ENCODE measurements at regions of chr17 and their contacts with region 1.

Region 1: DNA sequence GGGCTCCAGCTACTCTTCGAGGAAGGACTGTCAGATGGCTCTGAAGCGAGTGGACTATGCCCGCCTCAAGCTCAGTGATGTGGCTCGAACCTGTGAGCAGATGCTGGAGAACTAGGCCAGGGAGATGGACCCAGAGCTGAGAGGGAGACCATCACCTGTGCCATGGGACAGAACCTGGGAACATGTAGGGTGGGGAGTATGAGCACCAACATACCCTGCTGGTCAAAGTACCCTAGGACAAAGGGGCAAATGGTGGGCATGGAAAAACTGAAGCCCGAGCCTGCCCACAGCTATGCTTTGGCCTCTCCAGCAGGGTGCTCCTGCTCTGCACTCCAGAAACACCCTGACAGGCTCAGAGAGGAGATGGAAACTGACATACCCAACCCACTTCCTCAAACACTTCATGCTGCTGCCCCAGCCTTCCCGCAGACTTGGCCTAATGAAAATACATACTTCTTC is 1.9 kb downstream of the MED11 start:
- DNase-seq: peak; percentile 49
- ATAC-seq: peak; percentile 65
- H3K4me3 Mint-ChIP-seq: peak overlapping the region; percentile 70
- H3K27ac Mint-ChIP-seq: peak overlapping the region; percentile 90
- H3K4me1 Mint-ChIP-seq: peaks cover 54% of the 10 kb centered on the region
- H3K27me3 Mint-ChIP-seq: no peaks in the 10 kb centered on the region
- CTCF ChIP-seq: no peak

Region 2: DNA sequence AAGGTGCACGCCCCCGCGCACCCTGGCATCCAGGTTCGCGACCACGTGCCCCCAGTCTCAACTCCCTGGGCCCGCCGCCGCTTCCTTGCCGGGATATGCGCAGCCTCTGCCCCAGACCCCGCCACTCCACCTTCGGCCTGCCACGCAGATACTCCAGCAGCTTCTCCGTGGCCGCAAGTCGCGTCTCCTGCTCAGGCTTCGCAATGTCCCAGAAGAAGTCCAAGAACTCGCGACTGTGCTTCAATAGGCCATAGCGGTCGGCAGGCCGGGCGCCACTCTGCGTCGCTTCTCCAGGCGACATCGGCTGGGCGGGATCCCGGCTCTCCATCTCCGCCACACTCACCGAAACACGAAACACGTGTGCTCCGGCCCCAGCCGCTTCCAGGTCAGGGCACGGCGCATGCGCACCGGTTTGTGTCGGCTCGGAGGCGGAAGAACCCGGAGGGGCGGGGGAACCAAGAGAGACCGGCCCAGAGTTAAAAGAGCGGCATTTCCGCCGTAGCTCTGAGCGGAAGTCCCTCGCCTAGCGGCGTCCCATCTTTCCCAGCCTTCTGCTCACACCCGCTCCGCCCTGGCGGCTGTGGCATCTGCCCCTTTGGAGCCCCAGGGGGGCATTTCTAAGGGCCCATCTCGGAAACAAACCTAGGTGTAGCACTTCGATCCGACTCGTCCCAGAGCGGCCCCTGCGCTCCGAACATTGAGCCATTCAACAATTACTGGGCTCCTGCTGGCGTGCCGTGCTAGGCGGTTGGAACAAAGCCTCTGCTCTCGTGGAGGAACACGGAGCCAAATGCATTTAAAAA is 177.9 kb before region 1 on chr17 and contains the start of gene MYBBP1A:
- CTCF ChIA-PET with region 1: no interaction called
- POLR2A ChIA-PET with region 1: no interaction called
- intact Hi-C with region 1: loop called (anchors 1 kb)
- DNase-seq: peak; percentile 94
- ATAC-seq: peak; percentile 95
- H3K4me3 Mint-ChIP-seq: peak within 1 kb of the TSS; percentile 96
- H3K27ac Mint-ChIP-seq: peak within 1 kb of the TSS; percentile 98
- H3K4me1 Mint-ChIP-seq: peaks cover 28% of the 10 kb centered on the region
- H3K27me3 Mint-ChIP-seq: no peaks in the 10 kb centered on the region
- CTCF ChIP-seq: no peak
- total RNA-seq, gene MYBBP1A: 90.3 and 108 TPM in 2 replicates

Region 3: GRCh38 chr17:4789901-4790704 is 57.0 kb after region 1 on chr17:
- CTCF ChIA-PET with region 1: interaction called, 17 read pairs
- POLR2A ChIA-PET with region 1: interaction called, 10 read pairs
- intact Hi-C with region 1: loop called (anchors 1 kb)
- DNase-seq: peak; percentile 82
- ATAC-seq: peak; percentile 91
- H3K4me3 Mint-ChIP-seq: peak overlapping the region; percentile 89
- H3K27ac Mint-ChIP-seq: peak overlapping the region; percentile 80
- H3K4me1 Mint-ChIP-seq: peaks cover 19% of the 10 kb centered on the region
- H3K27me3 Mint-ChIP-seq: peaks cover 18% of the 10 kb centered on the region
- CTCF ChIP-seq: no peak

Region 4: GRCh38 chr17:4833178-4833940 is 100.3 kb after region 1 on chr17 and contains the start of gene MINK1:
- CTCF ChIA-PET with region 1: no interaction called
- POLR2A ChIA-PET with region 1: interaction called, 3 read pairs
- intact Hi-C with region 1: loop called (anchors 1 kb)
- DNase-seq: peak; percentile 88
- ATAC-seq: peak; percentile 95
- H3K4me3 Mint-ChIP-seq: peak within 1 kb of the TSS; percentile 94
- H3K27ac Mint-ChIP-seq: peak within 1 kb of the TSS; percentile 96
- H3K4me1 Mint-ChIP-seq: peaks cover 33% of the 10 kb centered on the region
- H3K27me3 Mint-ChIP-seq: no peaks in the 10 kb centered on the region
- CTCF ChIP-seq: no peak
- total RNA-seq, gene MINK1: 61.3 and 65.3 TPM in 2 replicates

Region 5: DNA sequence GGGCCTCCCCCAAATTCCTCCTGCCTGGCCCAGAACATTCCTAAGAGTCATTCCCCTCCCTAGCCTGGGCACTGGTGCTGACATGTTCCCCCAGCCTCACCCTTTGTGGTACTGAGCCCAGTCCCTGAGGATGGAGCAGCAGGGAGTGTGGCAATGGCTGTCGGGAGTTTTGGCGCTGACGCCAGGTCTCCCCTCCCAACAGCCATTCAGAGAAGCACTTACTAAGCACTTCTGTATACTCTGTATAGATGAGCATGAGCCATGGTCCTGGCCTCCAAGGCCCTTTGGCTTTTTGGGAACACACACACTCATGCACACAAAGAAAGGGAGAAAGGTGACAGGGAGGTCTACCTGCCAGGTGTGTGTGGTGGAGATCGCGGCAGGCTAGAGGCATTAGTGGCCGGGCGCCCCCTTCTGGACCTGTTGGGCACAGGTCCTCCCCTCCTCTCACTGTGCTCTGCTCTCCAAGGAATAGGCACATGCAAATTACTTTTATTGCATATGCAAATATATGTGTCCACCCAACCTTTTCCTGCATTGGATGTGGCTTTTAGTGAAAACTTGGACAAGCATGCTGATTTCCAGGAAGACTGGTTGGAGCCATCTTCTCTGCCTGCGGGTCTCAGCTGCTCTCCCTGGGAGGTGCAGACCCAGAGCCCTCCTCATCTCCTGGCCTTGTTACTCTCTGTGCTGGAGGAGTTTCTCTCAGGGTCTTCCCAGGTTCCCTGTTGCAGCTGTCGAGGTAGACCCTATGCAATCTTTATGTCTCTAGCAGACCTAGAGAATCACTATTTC is 148.9 kb after region 1 on chr17:
- CTCF ChIA-PET with region 1: interaction called, 7 read pairs
- POLR2A ChIA-PET with region 1: interaction called, 3 read pairs
- intact Hi-C with region 1: loop called (anchors 1 kb)
- DNase-seq: peak; percentile 50
- ATAC-seq: peak; percentile 93
- H3K4me3 Mint-ChIP-seq: no peak overlapping the region
- H3K27ac Mint-ChIP-seq: no peak overlapping the region
- H3K4me1 Mint-ChIP-seq: peaks cover 6% of the 10 kb centered on the region
- H3K27me3 Mint-ChIP-seq: no peaks in the 10 kb centered on the region
- CTCF ChIP-seq: peak; percentile 45

Region 6: GRCh38 chr17:4891411-4892342 is 158.6 kb after region 1 on chr17:
- CTCF ChIA-PET with region 1: interaction called, 4 read pairs
- POLR2A ChIA-PET with region 1: no interaction called
- intact Hi-C with region 1: loop called (anchors 1 kb)
- DNase-seq: no peak
- ATAC-seq: no peak
- H3K4me3 Mint-ChIP-seq: no peak overlapping the region
- H3K27ac Mint-ChIP-seq: no peak overlapping the region
- H3K4me1 Mint-ChIP-seq: peaks cover 4% of the 10 kb centered on the region
- H3K27me3 Mint-ChIP-seq: no peaks in the 10 kb centered on the region
- CTCF ChIP-seq: no peak

Region 7: GRCh38 chr17:5065227-5065744 is 332.2 kb after region 1 on chr17:
- CTCF ChIA-PET with region 1: no interaction called
- POLR2A ChIA-PET with region 1: no interaction called
- intact Hi-C with region 1: loop called (anchors 1 kb)
- DNase-seq: no peak
- ATAC-seq: no peak
- H3K4me3 Mint-ChIP-seq: no peak overlapping the region
- H3K27ac Mint-ChIP-seq: no peak overlapping the region
- H3K4me1 Mint-ChIP-seq: peaks cover 6% of the 10 kb centered on the region
- H3K27me3 Mint-ChIP-seq: peaks cover 5% of the 10 kb centered on the region
- CTCF ChIP-seq: no peak

Measured in activated B cell treated with CpG ODN at 0.5 μM for 24 hours (primary cell).